ENCODE measurements at regions of chr2 and their contacts with region 1.

Region 1: DNA sequence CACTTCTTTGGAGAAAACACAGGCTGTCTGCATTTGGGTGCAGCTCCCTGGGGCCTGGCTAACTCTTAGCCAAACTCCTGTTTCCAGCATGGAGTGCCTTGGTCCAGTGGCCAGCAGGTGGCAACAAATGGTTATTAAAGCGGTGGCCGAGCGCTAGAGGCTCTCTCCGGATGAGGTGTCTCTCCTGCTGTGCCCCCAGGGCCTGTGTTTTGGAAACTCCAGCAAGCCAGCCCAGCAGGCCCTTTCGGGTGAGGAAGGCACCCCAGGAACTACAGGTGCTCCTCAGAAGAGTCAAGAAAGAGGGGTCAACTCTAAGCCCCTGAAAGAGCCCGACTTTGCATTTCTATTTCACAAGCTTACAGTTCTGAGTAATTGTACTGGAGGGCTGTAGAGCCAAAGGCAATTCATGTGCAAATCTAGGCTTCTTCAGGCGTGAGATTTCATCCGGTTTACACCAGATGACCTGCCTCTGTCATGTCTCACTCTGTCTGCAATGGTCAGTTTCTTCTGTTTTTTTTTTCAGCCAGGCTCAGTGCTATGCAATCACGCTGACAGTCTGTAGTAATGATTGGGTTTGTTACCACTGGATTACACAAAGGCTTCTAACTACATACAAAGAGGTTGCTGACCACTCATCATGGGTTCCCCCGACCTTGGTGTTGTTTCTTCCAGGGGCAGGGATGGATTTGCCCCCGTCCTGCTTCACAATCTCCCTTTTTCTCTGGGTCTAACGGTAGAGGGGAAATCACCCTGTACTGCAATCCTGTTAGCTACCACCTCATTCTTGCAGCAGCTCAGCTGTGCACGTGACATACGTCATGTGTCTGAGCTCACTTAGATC is 7.6 kb upstream of the CHRNA1 start:
- DNase-seq: peak; percentile 74 to 78
- H3K4me3 ChIP-seq: no peak overlapping the region
- H3K4me3 Mint-ChIP-seq: no peak overlapping the region
- H3K27ac Mint-ChIP-seq: no peak overlapping the region
- H3K4me1 ChIP-seq: peaks cover 5% of the 10 kb centered on the region; the same call in 1 of the 2 replicates
- H3K4me1 Mint-ChIP-seq: no peaks in the 10 kb centered on the region
- H3K27me3 ChIP-seq: no peaks in the 10 kb centered on the region
- H3K27me3 Mint-ChIP-seq: no peaks in the 10 kb centered on the region
- CTCF ChIP-seq: peak; percentile 85 to 92

Region 2: DNA sequence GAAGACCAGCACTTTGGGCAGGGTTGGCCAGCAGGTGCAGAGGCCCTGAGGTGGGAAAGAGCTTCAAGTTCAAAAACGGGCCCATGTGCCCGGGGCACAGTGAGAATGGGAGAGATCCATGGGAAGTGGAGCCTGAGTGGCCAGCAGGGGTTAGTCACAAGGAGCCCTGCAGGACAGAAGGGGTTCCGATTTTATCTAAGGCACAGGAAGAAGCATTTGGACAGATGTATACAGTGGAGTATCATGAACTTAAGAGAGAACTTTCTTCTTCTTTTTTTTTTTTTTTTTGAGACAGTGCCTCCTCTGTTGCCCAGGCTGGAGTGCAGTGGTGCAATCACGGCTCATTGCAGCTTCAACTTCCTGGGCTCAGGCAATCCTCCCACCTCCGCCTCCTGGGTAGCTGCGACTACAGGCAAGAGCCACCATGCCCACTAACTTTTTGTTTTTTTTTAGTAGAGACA is 198.2 kb before region 1 on chr2:
- CTCF ChIA-PET with region 1: no interaction called
- POLR2A ChIA-PET with region 1: no interaction called
- intact Hi-C with region 1: no loop called
- DNase-seq: no peak
- H3K4me3 ChIP-seq: no peak overlapping the region
- H3K4me3 Mint-ChIP-seq: no peak overlapping the region
- H3K27ac Mint-ChIP-seq: no peak overlapping the region
- H3K4me1 ChIP-seq: no peaks in the 10 kb centered on the region
- H3K4me1 Mint-ChIP-seq: no peaks in the 10 kb centered on the region
- H3K27me3 ChIP-seq: no peaks in the 10 kb centered on the region
- H3K27me3 Mint-ChIP-seq: no peaks in the 10 kb centered on the region
- CTCF ChIP-seq: no peak

Region 3: GRCh38 chr2:174748948-174749347 is 22.9 kb before region 1 on chr2:
- CTCF ChIA-PET with region 1: interaction called, 38 read pairs
- POLR2A ChIA-PET with region 1: no interaction called
- intact Hi-C with region 1: loop called (anchors 2 kb)
- DNase-seq: peak; percentile 81 to 84
- H3K4me3 ChIP-seq: no peak overlapping the region
- H3K4me3 Mint-ChIP-seq: no peak overlapping the region
- H3K27ac Mint-ChIP-seq: peak overlapping the region; percentile 63
- H3K4me1 ChIP-seq: peaks cover 8% of the 10 kb centered on the region
- H3K4me1 Mint-ChIP-seq: no peaks in the 10 kb centered on the region
- H3K27me3 ChIP-seq: no peaks in the 10 kb centered on the region
- H3K27me3 Mint-ChIP-seq: no peaks in the 10 kb centered on the region
- CTCF ChIP-seq: peak; percentile 82 to 86

Region 4: DNA sequence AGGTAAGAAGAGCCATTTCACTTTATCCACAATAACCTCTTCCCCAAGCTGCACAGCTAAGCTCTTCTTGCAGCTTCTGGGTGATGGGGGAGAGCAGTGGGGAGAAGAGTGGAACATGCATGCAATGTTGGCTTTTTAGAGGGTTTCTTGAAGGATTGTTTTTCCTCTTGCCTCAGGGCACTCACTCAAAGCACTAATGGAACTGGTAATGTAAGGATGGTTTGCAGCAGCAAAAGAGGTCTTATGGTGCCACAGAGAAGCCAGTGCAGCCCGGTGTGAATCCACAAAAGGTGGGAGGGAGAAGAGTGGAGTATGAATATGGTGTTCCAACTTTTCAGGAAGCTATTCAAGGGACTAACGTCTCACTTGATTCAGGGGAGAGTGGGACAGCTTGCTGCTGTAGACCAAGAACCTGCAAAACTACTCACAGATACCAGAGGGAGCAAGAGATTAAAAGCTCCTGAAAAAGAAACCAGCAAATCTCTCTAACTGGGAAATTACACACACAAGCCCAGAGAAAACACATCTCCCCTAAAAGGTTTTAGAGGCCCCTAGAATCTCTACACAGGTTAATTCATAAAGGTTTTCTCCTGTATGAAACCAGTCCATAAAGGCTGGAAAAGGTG is 116.9 kb after region 1 on chr2:
- CTCF ChIA-PET with region 1: no interaction called
- POLR2A ChIA-PET with region 1: no interaction called
- intact Hi-C with region 1: loop called (anchors 10 kb)
- DNase-seq: no peak
- H3K4me3 ChIP-seq: no peak overlapping the region
- H3K4me3 Mint-ChIP-seq: no peak overlapping the region
- H3K27ac Mint-ChIP-seq: no peak overlapping the region
- H3K4me1 ChIP-seq: no peaks in the 10 kb centered on the region
- H3K4me1 Mint-ChIP-seq: no peaks in the 10 kb centered on the region
- H3K27me3 ChIP-seq: no peaks in the 10 kb centered on the region; the same call in 1 of the 2 replicates
- H3K27me3 Mint-ChIP-seq: peaks cover 15% of the 10 kb centered on the region
- CTCF ChIP-seq: peak in 1 of 2 experiments; percentile 1

Region 5: GRCh38 chr2:174985630-174986029 is 213.8 kb after region 1 on chr2:
- CTCF ChIA-PET with region 1: interaction called, 25 read pairs
- POLR2A ChIA-PET with region 1: no interaction called
- intact Hi-C with region 1: loop called (anchors 1 kb)
- DNase-seq: no peak
- H3K4me3 ChIP-seq: no peak overlapping the region
- H3K4me3 Mint-ChIP-seq: no peak overlapping the region
- H3K27ac Mint-ChIP-seq: no peak overlapping the region
- H3K4me1 ChIP-seq: no peaks in the 10 kb centered on the region
- H3K4me1 Mint-ChIP-seq: no peaks in the 10 kb centered on the region
- H3K27me3 ChIP-seq: no peaks in the 10 kb centered on the region
- H3K27me3 Mint-ChIP-seq: peaks cover 2% of the 10 kb centered on the region
- CTCF ChIP-seq: peak; percentile 54